ENCODE measurements at regions of chr11 and their contacts with region 1.

Region 1: DNA sequence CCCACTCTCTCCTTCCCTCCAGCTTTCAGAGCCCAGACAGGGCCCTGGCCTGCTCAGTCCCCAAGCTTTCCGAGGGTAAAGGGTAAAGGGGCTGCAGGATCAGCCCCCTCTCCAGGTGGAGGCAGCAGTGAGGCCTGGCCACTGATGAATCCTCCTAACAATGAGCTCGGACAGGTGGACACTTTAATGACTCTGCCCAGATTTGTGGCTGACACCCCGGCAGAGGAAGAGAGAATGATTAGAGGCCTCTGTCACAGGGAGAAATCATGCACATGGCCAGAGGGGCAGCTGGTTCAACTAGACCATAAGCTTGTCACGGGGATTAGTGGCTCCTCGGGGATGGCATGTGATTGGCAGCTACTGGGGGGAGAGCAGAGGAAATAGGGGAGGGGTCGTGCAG is 587.5 kb upstream of the B3GAT1 start:
- DNase-seq: no peak
- H3K4me3 ChIP-seq: no peak overlapping the region
- H3K27ac ChIP-seq: no peak overlapping the region
- H3K4me1 ChIP-seq: no peaks in the 10 kb centered on the region
- H3K27me3 ChIP-seq: peaks cover 7% of the 10 kb centered on the region; the same call in 1 of the 2 replicates
- CTCF ChIP-seq: no peak

Region 2: GRCh38 chr11:134425816-134426536 is 573.6 kb before region 1 on chr11:
- CTCF ChIA-PET with region 1: no interaction called
- POLR2A ChIA-PET with region 1: no interaction called
- intact Hi-C with region 1: no loop called
- DNase-seq: no peak
- H3K4me3 ChIP-seq: no peak overlapping the region
- H3K27ac ChIP-seq: no peak overlapping the region
- H3K4me1 ChIP-seq: no peaks in the 10 kb centered on the region
- H3K27me3 ChIP-seq: peaks cover 100% of the 10 kb centered on the region
- CTCF ChIP-seq: no peak

Region 3: GRCh38 chr11:134890446-134890845 is 109.1 kb before region 1 on chr11:
- CTCF ChIA-PET with region 1: interaction called, 11 read pairs
- POLR2A ChIA-PET with region 1: no interaction called
- intact Hi-C with region 1: no loop called
- DNase-seq: no peak
- H3K4me3 ChIP-seq: no peak overlapping the region
- H3K27ac ChIP-seq: no peak overlapping the region
- H3K4me1 ChIP-seq: no peaks in the 10 kb centered on the region
- H3K27me3 ChIP-seq: peaks cover 72% of the 10 kb centered on the region
- CTCF ChIP-seq: no peak

Region 4: DNA sequence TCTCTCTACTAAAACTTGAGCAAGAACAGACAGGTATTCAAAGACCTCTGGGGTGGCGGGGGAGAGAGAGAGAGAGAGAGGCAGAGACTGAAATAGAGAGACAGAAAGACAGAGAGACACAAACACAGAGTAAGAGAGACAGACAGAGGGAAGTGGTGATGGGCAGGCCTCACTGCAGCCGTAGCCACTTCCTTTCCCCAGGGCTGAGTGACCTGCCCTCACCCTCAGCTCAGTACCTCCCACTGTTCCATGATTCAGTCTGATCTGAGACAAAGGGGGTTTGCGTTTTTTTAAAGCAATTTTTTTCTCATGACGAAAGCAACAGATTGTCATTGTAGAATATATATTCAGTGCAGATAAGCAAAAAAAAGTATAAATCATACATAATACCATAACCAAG is 20.3 kb after region 1 on chr11:
- CTCF ChIA-PET with region 1: no interaction called
- POLR2A ChIA-PET with region 1: no interaction called
- intact Hi-C with region 1: no loop called
- DNase-seq: no peak
- H3K4me3 ChIP-seq: no peak overlapping the region
- H3K27ac ChIP-seq: no peak overlapping the region
- H3K4me1 ChIP-seq: no peaks in the 10 kb centered on the region
- H3K27me3 ChIP-seq: no peaks in the 10 kb centered on the region
- CTCF ChIP-seq: no peak